Activated CD4-positive, alpha-beta T cell treated with anti-CD3 and anti-CD28 coated beads, Interleukin-2, amount 10 ng/mL, durations not matched to agents 7 days and 5 days (primary cell): ENCODE measurements at regions of chr12 and their contacts with region 1.

Region 1: GRCh38 chr12:54579696-54580333 is 8.6 kb downstream of the PPP1R1A start:
- DNase-seq: peak; percentile 84
- H3K4me3 Mint-ChIP-seq: no peak overlapping the region
- H3K27ac Mint-ChIP-seq: no peak overlapping the region
- H3K4me1 Mint-ChIP-seq: no peaks in the 10 kb centered on the region
- H3K27me3 Mint-ChIP-seq: peaks cover 14% of the 10 kb centered on the region

Region 2: DNA sequence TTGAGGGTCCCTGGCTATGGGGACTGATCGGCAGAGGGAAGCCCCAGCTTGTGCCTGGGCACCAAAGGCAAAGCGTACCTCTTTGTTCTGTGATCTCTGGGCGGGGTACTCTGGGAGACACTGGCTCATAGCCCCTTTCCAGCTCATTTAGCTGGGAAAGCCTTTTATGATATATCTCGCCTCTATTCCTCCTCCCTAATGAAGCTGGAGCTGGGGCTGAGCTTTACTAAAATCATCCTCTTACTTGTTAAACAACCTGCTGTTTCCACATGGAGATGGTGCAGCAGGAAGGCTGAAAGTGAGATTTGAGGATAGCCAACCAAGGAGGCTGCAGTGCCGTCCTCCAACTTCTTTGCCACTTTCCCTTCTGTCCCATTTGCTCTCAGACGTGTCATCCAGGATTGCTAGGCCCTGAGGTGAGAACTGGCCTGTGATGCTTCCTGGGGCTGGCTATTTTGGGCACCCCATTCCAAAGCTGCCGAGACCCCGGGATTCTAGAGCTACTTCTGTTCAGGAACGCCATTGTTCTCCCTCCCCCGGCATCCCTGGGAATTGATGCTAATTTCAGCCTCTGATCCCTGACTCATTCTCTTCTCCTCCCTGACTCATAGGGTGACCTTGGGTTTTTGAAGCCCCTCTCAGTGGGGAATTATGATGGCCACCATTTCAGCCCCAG is 14.4 kb before region 1 on chr12:
- CTCF ChIA-PET with region 1: interaction called, 15 read pairs
- POLR2A ChIA-PET with region 1: no interaction called
- DNase-seq: no peak
- H3K4me3 Mint-ChIP-seq: no peak overlapping the region
- H3K27ac Mint-ChIP-seq: no peak overlapping the region
- H3K4me1 Mint-ChIP-seq: peaks cover 40% of the 10 kb centered on the region
- H3K27me3 Mint-ChIP-seq: no peaks in the 10 kb centered on the region

Region 3: GRCh38 chr12:54603173-54603814 is 23.5 kb after region 1 on chr12:
- CTCF ChIA-PET with region 1: interaction called, 13 read pairs
- POLR2A ChIA-PET with region 1: no interaction called
- DNase-seq: peak; percentile 68
- H3K4me3 Mint-ChIP-seq: no peak overlapping the region
- H3K27ac Mint-ChIP-seq: no peak overlapping the region
- H3K4me1 Mint-ChIP-seq: peaks cover 6% of the 10 kb centered on the region
- H3K27me3 Mint-ChIP-seq: peaks cover 20% of the 10 kb centered on the region

Region 4: DNA sequence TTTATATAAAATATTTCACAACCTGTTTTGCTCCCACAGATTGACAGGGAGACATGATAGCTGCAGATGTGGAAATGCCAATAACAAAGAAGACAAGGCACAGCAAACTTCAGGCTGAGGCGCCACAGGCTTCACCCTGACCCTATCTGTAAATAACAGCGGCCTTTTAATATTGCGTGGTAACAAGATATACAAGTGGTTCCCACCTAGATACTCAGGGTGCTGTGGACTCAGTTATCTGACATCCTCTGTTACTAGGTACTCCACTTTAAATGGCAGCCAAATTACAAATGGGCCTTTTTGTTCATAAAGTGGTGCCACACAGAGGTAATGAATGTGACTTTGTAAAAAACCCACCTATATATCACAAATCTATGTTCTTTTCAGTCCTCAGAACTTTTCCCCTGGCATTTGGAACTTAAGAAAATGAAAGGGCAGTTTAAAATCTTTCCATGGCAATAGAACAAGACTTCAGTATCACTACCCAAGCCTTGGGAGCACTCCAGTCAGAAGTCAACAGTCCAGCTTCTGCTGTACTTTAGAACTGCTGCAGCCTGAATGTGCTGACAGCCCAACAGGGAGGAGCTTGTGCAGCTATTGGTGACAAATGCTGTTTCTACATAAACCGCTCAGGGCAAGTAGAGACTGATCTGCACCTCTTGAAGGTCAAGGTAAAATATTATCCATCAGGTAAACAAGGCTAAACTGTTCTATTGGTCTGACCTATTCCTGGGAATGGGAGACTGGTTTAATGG is 154.6 kb after region 1 on chr12:
- CTCF ChIA-PET with region 1: no interaction called
- POLR2A ChIA-PET with region 1: no interaction called
- DNase-seq: no peak
- H3K4me3 Mint-ChIP-seq: no peak overlapping the region
- H3K27ac Mint-ChIP-seq: no peak overlapping the region
- H3K4me1 Mint-ChIP-seq: peaks cover 35% of the 10 kb centered on the region
- H3K27me3 Mint-ChIP-seq: peaks cover 23% of the 10 kb centered on the region